Activated B cell treated with CpG ODN at 0.5 μM for 24 hours (primary cell): ENCODE measurements at regions of chr20 and their contacts with region 1.

Region 1: DNA sequence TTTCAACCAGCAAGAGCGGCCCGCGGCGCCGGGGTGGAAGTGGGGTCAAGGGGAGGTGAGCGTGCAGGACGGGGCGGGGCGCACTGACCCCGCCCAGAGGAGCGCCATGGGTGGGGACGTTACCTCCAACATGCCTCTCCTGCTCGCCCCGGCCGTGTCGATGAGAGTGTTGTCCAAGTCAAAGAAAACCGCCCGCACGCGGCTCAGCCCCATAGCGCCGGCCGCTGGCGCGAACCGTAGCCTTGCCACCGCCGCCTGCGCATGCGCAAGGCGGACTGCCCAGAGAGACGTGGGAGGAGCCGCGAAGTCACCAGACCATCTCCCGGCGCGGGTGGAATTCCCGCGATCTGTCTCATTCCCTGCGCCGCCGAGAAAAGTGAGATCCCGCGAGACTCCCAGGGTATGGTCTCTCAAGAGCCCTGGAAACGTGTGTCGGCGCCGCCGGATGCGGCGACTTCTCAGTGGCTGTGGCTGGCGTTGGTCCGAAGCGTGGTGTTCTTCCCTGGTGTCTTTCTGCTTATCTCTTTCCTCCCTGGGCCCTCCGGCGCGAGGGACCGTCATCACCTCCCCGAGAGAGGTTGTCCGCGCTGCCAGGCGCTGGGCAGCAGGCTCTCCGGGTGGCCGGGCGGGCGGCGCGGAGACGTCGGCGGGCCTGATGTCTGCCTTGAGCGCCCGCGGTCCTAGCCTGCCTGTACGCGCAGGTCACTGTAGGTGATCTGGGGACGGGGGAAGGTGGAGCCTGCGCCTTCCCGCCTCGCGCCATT is at the start of gene NANP:
- DNase-seq: peak; percentile 88
- ATAC-seq: peak; percentile 84
- H3K4me3 Mint-ChIP-seq: peak within 1 kb of the TSS; percentile 92
- H3K27ac Mint-ChIP-seq: peak within 1 kb of the TSS; percentile 92
- H3K4me1 Mint-ChIP-seq: peaks cover 25% of the 10 kb centered on the region
- H3K27me3 Mint-ChIP-seq: no peaks in the 10 kb centered on the region
- CTCF ChIP-seq: no peak
- total RNA-seq, gene NANP: 2.3 and 2.7 TPM in 2 replicates

Region 2: GRCh38 chr20:25247956-25248785 is 375.7 kb before region 1 on chr20 and contains the start of gene PYGB:
- CTCF ChIA-PET with region 1: no interaction called
- POLR2A ChIA-PET with region 1: no interaction called
- intact Hi-C with region 1: loop called (anchors 1 kb)
- DNase-seq: peak; percentile 77
- ATAC-seq: peak; percentile 87
- H3K4me3 Mint-ChIP-seq: peak within 1 kb of the TSS; percentile 94
- H3K27ac Mint-ChIP-seq: peak within 1 kb of the TSS; percentile 86
- H3K4me1 Mint-ChIP-seq: peaks cover 25% of the 10 kb centered on the region
- H3K27me3 Mint-ChIP-seq: peaks cover 10% of the 10 kb centered on the region
- CTCF ChIP-seq: no peak
- total RNA-seq, gene PYGB: 21.5 and 23.5 TPM in 2 replicates

Region 3: GRCh38 chr20:25318471-25319240 is 305.3 kb before region 1 on chr20:
- CTCF ChIA-PET with region 1: no interaction called
- POLR2A ChIA-PET with region 1: no interaction called
- intact Hi-C with region 1: loop called (anchors 1 kb)
- DNase-seq: peak; percentile 24
- ATAC-seq: peak; percentile 93
- H3K4me3 Mint-ChIP-seq: peak overlapping the region; percentile 52
- H3K27ac Mint-ChIP-seq: peak overlapping the region; percentile 87
- H3K4me1 Mint-ChIP-seq: peaks cover 39% of the 10 kb centered on the region
- H3K27me3 Mint-ChIP-seq: no peaks in the 10 kb centered on the region
- CTCF ChIP-seq: no peak

Region 4: GRCh38 chr20:25407311-25408169 is 216.4 kb before region 1 on chr20 and contains the start of gene GINS1:
- CTCF ChIA-PET with region 1: no interaction called
- POLR2A ChIA-PET with region 1: interaction called, 3 read pairs
- intact Hi-C with region 1: loop called (anchors 1 kb)
- DNase-seq: peak; percentile 70
- ATAC-seq: peak; percentile 93
- H3K4me3 Mint-ChIP-seq: peak within 1 kb of the TSS; percentile 91
- H3K27ac Mint-ChIP-seq: peak within 1 kb of the TSS; percentile 76
- H3K4me1 Mint-ChIP-seq: peaks cover 17% of the 10 kb centered on the region
- H3K27me3 Mint-ChIP-seq: no peaks in the 10 kb centered on the region
- CTCF ChIP-seq: no peak
- total RNA-seq, gene GINS1: 2.9 and 5.4 TPM in 2 replicates

Region 5: DNA sequence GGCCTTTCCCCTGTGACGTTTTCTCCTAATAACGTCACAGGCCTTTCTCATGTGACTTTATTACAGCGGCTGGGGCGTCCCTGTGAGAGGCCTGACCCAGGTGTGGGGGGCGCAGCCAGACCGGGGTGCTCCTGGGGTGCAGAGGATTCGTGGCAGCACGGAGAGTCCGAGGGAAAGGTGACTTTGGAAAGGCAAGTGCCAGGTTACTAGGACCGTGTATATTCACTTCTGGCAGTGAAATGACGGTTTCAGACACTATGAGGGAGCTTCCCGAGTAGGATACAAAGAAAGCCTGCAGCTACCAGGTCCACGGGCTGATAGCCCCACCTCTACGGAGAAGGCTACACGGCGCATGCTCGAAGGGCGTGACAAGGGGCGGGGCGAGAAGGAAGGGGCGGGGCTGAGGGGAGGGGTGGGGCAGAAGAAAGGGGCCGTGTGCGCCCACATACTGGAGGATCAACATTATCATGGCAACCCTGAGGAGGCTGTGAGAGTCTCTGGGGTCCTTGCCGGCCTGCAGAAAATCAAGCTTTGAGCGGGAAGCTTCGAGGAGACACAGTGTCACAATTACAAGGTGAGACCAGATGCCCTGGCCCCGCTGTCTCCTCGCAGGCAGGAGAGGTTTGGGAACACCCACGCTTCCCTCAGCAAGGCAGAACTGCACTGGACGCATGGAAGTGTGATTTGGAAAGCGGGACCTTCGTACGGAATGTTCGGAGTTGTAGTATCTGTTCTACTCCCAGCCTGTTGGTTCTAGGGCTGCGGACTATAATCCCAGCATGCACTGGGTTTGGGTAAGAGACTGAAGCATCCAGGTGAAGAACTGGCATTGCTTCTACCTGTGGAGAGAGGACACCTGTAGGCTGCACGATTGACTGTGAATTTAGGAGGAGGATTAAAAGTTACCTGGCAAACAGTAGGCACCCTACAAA is 127.1 kb after region 1 on chr20:
- CTCF ChIA-PET with region 1: no interaction called
- POLR2A ChIA-PET with region 1: no interaction called
- intact Hi-C with region 1: loop called (anchors 1 kb)
- DNase-seq: peak; percentile 32
- ATAC-seq: peak; percentile 98
- H3K4me3 Mint-ChIP-seq: peak overlapping the region; percentile 84
- H3K27ac Mint-ChIP-seq: peak overlapping the region; percentile 41
- H3K4me1 Mint-ChIP-seq: peaks cover 14% of the 10 kb centered on the region
- H3K27me3 Mint-ChIP-seq: no peaks in the 10 kb centered on the region
- CTCF ChIP-seq: no peak